IMR-90 (cell line): ENCODE measurements at regions of chr6 and their contacts with region 1.

Region 1: DNA sequence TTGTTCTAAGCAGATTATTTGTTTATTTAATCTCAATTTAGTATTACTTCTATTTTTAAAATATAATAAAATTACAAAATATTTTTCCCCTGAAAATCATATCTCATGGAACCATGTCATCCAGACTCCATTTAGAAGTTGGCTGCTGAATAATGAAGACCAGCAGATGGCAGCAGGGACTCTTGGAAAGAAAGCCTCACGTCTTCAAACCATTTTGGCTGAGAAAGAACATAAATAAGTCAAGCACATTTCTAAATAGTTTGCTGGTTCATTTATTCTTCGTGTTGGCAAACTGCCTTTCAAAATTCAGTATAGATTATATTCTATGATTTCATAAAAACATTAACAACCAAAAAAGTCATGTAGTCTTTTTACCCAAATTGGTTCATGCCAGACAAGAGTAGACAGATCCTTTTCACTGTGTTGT is 71.7 kb downstream of the RCAN2 start:
- DNase-seq: peak; percentile 67
- ATAC-seq: peak; percentile 74; the same call in 1 of the 2 replicates
- H3K4me3 ChIP-seq: no peak overlapping the region
- H3K27ac ChIP-seq: no peak overlapping the region
- H3K4me1 ChIP-seq: no peaks in the 10 kb centered on the region
- H3K27me3 ChIP-seq: no peaks in the 10 kb centered on the region
- CTCF ChIP-seq: peak; percentile 82
- POLR2A ChIP-seq: no peak
- RAD21 ChIP-seq: peak; percentile 83

Region 2: DNA sequence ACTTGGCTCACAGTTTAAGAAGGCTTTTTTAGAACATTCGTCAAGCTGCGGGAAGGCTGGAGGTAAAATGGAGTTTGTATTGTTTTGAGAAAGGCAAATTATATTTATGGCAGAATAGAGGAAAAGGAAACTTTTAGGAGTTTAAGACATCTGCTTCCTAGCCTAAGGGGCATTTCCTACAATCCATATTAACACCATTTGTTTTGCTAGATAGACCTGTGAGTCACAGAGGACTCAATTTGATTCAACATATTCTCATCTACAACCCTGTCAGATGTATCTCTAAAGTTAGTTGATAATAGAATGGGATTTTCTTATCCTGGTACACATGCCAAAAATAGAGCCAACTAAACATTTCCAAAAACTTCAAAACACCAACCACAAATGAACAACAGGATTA is 36.7 kb after region 1 on chr6:
- CTCF ChIA-PET with region 1: no interaction called
- POLR2A ChIA-PET with region 1: no interaction called
- dilution Hi-C with region 1: no loop called
- in situ Hi-C with region 1: no loop called
- intact Hi-C with region 1: no loop called
- DNase-seq: no peak
- ATAC-seq: no peak
- H3K4me3 ChIP-seq: no peak overlapping the region
- H3K27ac ChIP-seq: no peak overlapping the region
- H3K4me1 ChIP-seq: no peaks in the 10 kb centered on the region
- H3K27me3 ChIP-seq: no peaks in the 10 kb centered on the region
- CTCF ChIP-seq: no peak
- POLR2A ChIP-seq: no peak
- RAD21 ChIP-seq: no peak

Region 3: DNA sequence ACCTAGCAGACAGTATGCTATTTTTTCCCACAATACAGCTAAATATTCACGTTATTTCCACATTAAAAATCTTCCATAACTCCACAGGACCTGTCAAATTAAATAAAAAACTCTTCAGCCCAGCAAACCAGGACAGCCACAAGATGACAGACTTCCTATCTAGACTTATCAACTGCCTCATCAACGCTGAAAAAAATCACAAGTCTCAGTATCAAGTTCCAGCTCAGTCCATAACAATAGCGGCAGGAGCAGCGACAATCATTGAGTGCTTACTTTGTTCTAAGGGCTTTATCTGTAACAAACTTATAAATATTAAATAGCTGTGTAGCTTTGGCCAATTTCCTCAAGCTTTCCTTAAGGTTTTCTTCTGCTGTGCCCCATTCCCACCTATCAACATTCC is 47.0 kb after region 1 on chr6:
- CTCF ChIA-PET with region 1: no interaction called
- POLR2A ChIA-PET with region 1: no interaction called
- dilution Hi-C with region 1: no loop called
- in situ Hi-C with region 1: no loop called
- intact Hi-C with region 1: no loop called
- DNase-seq: no peak
- ATAC-seq: no peak
- H3K4me3 ChIP-seq: no peak overlapping the region
- H3K27ac ChIP-seq: no peak overlapping the region
- H3K4me1 ChIP-seq: 0 out of 2 replicates have a peak, but pooled peaks cover 3% of the 10 kb centered on the region
- H3K27me3 ChIP-seq: no peaks in the 10 kb centered on the region
- CTCF ChIP-seq: no peak
- POLR2A ChIP-seq: no peak
- RAD21 ChIP-seq: no peak

Region 4: DNA sequence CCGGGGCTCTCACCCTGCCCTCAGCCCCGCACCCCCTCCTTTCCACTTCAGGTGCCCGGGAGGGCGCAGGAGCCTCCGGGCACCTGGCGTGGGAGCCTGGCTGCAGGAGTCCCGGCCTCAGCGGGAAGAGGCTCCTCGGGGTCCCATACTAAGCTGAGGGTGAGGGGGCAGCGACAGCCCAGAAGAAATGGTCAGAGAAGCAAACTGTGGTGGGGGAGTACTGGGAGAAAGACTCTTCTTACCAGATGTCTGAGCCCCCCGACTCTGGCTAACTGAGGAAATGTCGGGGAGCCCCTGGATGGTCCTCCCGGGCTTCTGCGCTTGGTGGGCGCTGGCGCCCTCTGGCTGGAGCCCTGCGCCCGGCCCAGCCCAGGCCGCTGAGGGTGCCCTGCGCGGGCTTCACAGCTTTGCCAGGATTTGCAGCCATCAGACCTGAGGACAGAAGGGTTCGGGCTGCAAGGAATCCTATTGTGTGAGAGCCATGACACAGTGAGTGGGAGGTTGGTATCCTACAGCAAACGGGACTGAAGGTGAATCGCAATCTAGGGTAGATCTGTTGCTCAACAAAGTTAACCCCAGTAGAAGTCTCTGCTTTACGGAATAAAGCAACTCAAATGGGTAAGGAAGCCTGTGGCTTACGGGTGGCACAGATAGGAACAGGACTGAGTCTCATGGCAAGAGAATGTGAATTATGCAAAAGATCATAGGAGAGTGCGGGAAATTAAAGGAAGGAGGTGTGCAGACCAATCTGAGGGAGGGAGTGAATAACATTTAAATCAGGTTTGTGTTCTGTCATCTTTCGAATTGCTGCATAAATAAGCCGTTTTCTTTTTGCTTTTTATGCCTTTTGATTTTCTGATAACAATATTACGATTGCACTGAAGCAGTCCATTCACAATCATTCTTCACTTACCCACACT is 72.3 kb after region 1 on chr6:
- CTCF ChIA-PET with region 1: interaction called, 6 read pairs
- POLR2A ChIA-PET with region 1: no interaction called
- dilution Hi-C with region 1: no loop called
- in situ Hi-C with region 1: no loop called
- intact Hi-C with region 1: loop called (anchors 1 kb)
- DNase-seq: peak; percentile 1
- ATAC-seq: peak; percentile 67
- H3K4me3 ChIP-seq: peak overlapping the region; percentile 50
- H3K27ac ChIP-seq: no peak overlapping the region
- H3K4me1 ChIP-seq: no peaks in the 10 kb centered on the region
- H3K27me3 ChIP-seq: peaks cover 21% of the 10 kb centered on the region
- CTCF ChIP-seq: peak; percentile 40
- POLR2A ChIP-seq: no peak
- RAD21 ChIP-seq: peak; percentile 42

Region 5: DNA sequence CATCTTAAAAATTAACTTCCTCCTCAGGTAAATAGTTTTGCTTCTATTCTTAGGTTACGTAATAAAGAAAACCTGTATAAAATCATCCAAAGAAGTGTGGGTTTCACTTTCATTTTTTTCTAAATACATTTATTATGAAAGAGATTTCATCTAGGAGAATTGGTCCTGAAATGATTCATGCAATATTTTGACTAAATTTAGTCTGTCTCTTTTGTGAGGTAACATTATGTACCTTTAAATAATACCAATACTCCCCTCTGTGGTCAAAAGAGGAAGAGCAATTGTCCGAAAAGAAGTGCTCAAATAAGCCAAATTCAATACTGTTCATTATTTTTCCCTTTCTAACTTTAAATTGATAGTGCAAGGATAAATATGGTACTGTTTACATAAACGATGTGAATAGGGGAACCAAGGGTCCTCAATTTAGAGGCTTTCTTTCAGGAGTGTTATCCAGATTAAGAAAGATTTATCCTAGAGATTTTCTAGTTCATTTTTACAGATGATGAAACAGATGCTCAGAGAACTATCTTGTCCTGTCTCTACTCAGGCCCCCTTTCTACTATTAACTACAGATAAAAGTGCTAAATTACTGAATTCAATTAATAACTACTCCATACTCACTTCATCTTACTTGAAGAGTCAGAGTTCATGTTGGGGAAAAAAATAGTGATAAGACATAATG is 206.8 kb after region 1 on chr6:
- CTCF ChIA-PET with region 1: interaction called, 4 read pairs
- POLR2A ChIA-PET with region 1: no interaction called
- dilution Hi-C with region 1: no loop called
- in situ Hi-C with region 1: no loop called
- intact Hi-C with region 1: loop called (anchors 1 kb)
- DNase-seq: peak; percentile 21
- ATAC-seq: peak; percentile 57; the same call in 1 of the 2 replicates
- H3K4me3 ChIP-seq: no peak overlapping the region
- H3K27ac ChIP-seq: no peak overlapping the region
- H3K4me1 ChIP-seq: no peaks in the 10 kb centered on the region
- H3K27me3 ChIP-seq: no peaks in the 10 kb centered on the region
- CTCF ChIP-seq: peak; percentile 57
- POLR2A ChIP-seq: no peak
- RAD21 ChIP-seq: peak; percentile 56

Region 6: DNA sequence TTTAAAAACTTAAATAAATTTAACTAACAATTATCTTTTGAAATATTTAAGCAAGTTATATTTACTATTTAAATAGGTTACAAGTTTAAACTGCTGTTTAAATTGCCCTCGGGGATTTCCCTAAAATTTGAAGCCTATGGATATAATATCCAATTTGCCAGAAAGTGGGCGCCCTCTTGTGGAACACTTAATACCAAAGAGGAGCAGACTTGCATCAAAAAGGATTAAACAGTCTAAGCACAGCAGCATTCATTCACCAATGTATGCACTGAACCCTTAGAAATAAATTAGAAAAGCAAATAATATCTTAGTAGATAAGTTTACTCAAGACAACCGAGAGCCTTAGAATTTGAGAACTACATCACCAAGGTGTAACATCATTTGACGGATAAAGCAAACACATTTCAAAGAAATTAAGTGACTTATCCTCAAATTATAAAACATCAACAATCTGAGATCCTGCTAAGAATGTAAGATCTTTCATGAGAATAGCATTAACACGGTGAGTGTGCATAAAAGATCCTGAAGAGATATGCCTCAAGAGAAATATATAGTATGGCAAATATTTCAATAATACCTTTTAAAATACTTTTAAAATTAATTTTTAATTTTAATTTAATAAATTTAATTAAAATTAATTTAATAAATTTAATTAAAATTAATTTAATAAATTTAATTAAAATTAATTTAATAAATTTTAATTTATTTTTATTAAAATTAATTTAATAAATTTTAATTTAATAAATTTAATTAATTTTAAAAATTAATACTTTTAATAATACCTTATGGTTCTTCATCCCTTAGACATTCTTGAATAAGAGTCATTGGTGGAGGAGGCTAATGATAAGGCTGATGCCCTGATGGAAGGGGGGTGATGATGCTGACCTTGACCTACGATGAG is 362.1 kb after region 1 on chr6:
- CTCF ChIA-PET with region 1: no interaction called
- POLR2A ChIA-PET with region 1: no interaction called
- dilution Hi-C with region 1: no loop called
- in situ Hi-C with region 1: loop called (anchors 25 kb)
- intact Hi-C with region 1: loop called (anchors 1 kb)
- DNase-seq: peak; percentile 50
- ATAC-seq: peak; percentile 66; the same call in 1 of the 2 replicates
- H3K4me3 ChIP-seq: no peak overlapping the region
- H3K27ac ChIP-seq: no peak overlapping the region
- H3K4me1 ChIP-seq: no peaks in the 10 kb centered on the region
- H3K27me3 ChIP-seq: no peaks in the 10 kb centered on the region
- CTCF ChIP-seq: peak; percentile 59
- POLR2A ChIP-seq: no peak
- RAD21 ChIP-seq: peak; percentile 56

Region 7: GRCh38 chr6:46828939-46829338 is 409.4 kb after region 1 on chr6:
- CTCF ChIA-PET with region 1: no interaction called
- POLR2A ChIA-PET with region 1: no interaction called
- dilution Hi-C with region 1: no loop called
- in situ Hi-C with region 1: no loop called
- intact Hi-C with region 1: no loop called
- DNase-seq: no peak
- ATAC-seq: no peak
- H3K4me3 ChIP-seq: no peak overlapping the region
- H3K27ac ChIP-seq: no peak overlapping the region
- H3K4me1 ChIP-seq: no peaks in the 10 kb centered on the region
- H3K27me3 ChIP-seq: no peaks in the 10 kb centered on the region
- CTCF ChIP-seq: no peak
- POLR2A ChIP-seq: no peak
- RAD21 ChIP-seq: no peak

Region 8: GRCh38 chr6:47047479-47048407 is 628.2 kb after region 1 on chr6:
- CTCF ChIA-PET with region 1: no interaction called
- POLR2A ChIA-PET with region 1: no interaction called
- dilution Hi-C with region 1: no loop called
- in situ Hi-C with region 1: no loop called
- intact Hi-C with region 1: loop called (anchors 1 kb)
- DNase-seq: peak; percentile 62
- ATAC-seq: peak; percentile 89
- H3K4me3 ChIP-seq: no peak overlapping the region
- H3K27ac ChIP-seq: no peak overlapping the region
- H3K4me1 ChIP-seq: no peaks in the 10 kb centered on the region
- H3K27me3 ChIP-seq: no peaks in the 10 kb centered on the region
- CTCF ChIP-seq: peak; percentile 71
- POLR2A ChIP-seq: no peak
- RAD21 ChIP-seq: peak; percentile 66